ENCODE measurements at regions of chr1 and their contacts with region 1.

Region 1: GRCh38 chr1:226736908-226737818 is 1.9 kb downstream of the ITPKB start:
- DNase-seq: peak; percentile 77

Region 2: DNA sequence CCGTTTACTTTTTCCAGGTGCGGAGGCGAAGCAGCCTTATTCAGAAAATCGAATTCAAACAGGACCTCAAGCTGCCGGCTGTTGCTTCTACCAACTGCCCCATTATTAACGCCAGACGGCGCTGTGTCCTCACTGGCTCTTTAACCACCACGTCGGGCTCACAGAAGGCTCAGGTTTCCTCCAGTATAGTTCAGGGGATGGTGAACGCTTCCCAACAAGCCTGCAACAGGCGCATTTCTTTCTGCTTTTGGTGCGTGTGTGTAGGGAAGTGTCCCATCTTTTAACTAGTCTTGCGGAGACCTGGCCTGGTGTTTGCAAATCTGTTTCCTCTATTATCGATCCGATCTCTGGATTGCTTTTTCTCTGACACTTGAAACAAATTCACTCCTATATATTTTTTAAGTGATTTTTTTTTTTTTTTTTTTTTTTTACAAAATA is 189.4 kb before region 1 on chr1:
- intact Hi-C with region 1: loop called (anchors 10 kb)
- DNase-seq: peak; percentile 87

Region 3: DNA sequence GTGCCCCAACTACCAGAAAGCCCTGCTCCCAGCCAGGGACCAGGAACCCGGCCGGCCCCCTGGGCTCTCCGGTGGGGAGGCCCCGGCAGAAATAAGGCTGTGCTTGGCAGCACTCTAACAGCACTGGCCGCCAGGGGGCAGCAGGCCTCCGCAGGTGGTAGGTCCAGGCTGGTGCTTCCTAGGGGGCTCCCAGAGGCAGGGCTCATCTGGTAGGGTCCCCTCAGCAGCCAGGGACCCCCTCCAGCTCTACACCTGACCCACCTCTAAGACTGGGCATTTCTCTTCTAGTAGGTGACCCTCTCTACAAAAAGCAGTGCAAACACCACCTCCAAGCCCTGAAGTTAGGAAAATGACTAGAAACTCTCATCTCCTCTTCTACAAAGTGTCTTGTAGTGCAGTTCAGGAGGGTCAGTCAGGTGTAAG is 103.0 kb before region 1 on chr1:
- intact Hi-C with region 1: loop called (anchors 5 kb)
- DNase-seq: peak; percentile 91

Region 4: DNA sequence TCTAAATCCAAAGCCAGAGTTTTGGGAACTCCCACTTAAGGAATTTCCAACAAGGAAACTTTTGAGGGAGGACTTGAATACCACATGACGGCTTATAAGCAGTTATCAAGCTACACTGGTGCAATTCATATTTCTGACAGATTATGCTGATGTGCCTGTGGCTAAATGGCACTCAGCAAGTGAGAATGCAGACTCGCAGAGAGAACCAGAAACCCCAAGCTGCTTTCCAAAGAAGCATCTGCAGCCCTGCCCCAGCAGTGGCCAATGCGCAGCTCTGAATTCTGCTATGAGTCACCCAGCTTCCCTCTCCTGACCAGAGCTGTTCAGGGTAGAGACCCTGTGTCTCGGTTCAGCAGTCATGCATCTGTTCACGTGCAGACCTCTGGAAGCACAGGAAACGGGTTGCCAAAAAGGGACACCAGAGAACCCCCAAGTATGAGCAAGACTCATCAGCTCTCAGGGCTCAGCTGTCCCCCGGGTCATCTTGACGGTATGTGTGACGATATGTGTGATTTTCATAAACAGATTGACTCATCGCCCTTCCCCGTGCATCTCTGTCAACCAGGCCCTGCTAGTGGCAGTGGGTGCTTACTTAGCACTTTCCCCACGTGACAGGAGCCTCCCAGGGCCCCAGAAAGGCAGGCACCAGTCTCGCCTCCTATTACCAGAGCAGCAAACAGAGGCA is 74.4 kb before region 1 on chr1:
- intact Hi-C with region 1: loop called (anchors 5 kb)
- DNase-seq: peak; percentile 86

Region 5: DNA sequence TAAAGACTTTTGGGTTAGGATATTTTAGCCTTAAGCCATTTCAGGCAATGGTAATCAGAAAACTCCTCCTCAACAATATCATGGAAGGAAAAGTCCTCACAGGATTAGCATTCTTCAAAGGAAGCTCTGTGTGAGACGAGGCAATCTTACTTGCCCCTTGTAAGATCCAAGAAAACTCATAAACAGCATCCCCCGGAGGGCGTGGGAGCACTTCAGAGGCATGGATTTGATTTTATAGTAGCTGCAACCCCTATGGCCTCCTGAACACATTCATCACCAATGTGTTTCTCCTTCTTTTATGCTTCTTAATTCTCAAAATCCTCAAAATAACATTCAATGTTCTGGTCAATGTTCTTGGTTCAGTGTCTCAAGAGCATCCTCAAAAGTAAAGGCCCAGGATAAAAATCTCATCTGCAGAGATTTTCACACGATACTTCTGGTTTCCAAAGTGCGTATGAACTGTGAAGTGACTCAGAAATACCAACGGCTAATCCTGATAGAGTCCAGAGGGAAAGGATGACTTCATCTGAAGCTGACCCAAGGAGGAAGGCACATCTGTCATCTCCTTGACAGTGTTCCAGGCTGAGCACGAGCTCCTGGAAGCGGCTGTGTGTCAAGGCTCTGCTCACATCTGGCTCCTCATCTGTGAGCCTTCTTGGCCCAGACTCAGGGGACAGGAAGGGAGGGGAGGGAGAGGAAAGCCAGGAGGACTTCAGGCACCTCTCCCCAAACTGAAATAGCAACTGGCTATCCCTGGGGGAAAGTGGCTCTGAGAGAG is 84.0 kb after region 1 on chr1:
- intact Hi-C with region 1: loop called (anchors 2 kb)
- DNase-seq: peak; percentile 79